ENCODE measurements at regions of chr7 and their contacts with region 1.

Region 1: GRCh38 chr7:8217200-8218068 is 44.5 kb downstream of the ICA1 start:
- DNase-seq: no peak
- H3K4me3 ChIP-seq: no peak overlapping the region
- H3K27ac ChIP-seq: no peak overlapping the region
- H3K4me1 ChIP-seq: no peaks in the 10 kb centered on the region
- H3K27me3 ChIP-seq: no peaks in the 10 kb centered on the region
- CTCF ChIP-seq: peak; percentile 70 to 87 (median 75)
- POLR2A ChIP-seq: no peak

Region 2: DNA sequence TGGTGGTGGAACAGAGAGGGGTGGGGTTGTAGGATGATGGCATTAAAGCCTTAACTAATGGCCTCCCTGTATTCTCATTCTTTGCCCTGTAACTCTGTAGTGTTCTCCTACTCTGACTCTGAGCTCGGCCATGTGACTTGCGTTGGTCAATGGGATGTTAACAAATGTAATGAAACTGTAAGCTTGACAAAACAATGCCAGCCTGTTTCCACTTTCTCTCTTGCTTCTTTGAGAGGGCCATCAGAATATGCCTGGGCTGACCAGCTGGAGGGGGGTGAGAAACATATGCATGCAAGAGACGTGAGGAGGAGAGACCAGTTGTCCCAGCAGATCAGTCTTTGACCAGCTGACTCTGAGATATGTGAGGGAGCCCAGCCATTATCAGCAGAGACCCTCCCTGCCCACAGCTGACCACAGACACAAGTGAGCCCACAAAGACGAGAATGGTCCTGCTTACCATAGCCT is 56.0 kb before region 1 on chr7:
- intact Hi-C with region 1: loop called (anchors 2 kb)
- DNase-seq: no peak
- H3K4me3 ChIP-seq: no peak overlapping the region
- H3K27ac ChIP-seq: no peak overlapping the region
- H3K4me1 ChIP-seq: no peaks in the 10 kb centered on the region
- H3K27me3 ChIP-seq: no peaks in the 10 kb centered on the region
- CTCF ChIP-seq: no peak
- POLR2A ChIP-seq: no peak

Measured in breast epithelium (tissue), 4 donors.